ENCODE measurements at regions of chr3 and their contacts with region 1.

Region 1: GRCh38 chr3:102529452-102529851 is 94.6 kb downstream of the ZPLD1 start:
- DNase-seq: peak; percentile 77
- ATAC-seq: peak; percentile 55
- H3K4me3 ChIP-seq: no peak overlapping the region
- H3K27ac ChIP-seq: peak overlapping the region; percentile 95
- H3K4me1 ChIP-seq: peaks cover 37% of the 10 kb centered on the region
- H3K27me3 ChIP-seq: no peaks in the 10 kb centered on the region
- CTCF ChIP-seq: peak; percentile 87

Region 2: GRCh38 chr3:102400766-102401165 is 128.7 kb before region 1 on chr3:
- CTCF ChIA-PET with region 1: no interaction called
- POLR2A ChIA-PET with region 1: interaction called, 4 read pairs
- intact Hi-C with region 1: loop called (anchors 2 kb)
- DNase-seq: peak; percentile 94
- ATAC-seq: peak; percentile 94
- H3K4me3 ChIP-seq: peak overlapping the region; percentile 10; the same call in 1 of the 2 replicates
- H3K27ac ChIP-seq: peak overlapping the region; percentile 86
- H3K4me1 ChIP-seq: peaks cover 34% of the 10 kb centered on the region
- H3K27me3 ChIP-seq: no peaks in the 10 kb centered on the region
- CTCF ChIP-seq: no peak

Region 3: GRCh38 chr3:102466001-102466400 is 63.5 kb before region 1 on chr3:
- CTCF ChIA-PET with region 1: no interaction called
- POLR2A ChIA-PET with region 1: no interaction called
- intact Hi-C with region 1: loop called (anchors 2 kb)
- DNase-seq: peak; percentile 51
- ATAC-seq: peak; percentile 90
- H3K4me3 ChIP-seq: no peak overlapping the region
- H3K27ac ChIP-seq: no peak overlapping the region
- H3K4me1 ChIP-seq: peaks cover 6% of the 10 kb centered on the region
- H3K27me3 ChIP-seq: no peaks in the 10 kb centered on the region
- CTCF ChIP-seq: peak; percentile 66

Region 4: DNA sequence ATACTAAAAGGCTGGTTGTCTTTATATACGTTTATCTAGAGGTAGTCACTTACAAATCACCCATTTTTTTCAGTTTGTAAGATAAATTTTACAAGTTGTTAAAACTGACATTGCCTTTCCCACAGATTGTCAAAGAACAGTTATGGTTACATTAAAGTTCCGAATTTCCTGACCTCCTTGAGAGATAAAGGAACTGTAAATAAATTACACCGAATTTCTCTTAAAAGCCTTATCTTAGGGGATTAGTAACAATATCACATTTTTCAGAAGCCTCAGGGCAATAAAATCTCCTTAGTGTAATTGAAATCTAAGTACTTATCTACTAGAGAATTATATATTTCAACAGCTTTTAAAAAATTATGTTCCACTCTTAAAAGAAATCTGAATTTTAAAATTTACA is 45.1 kb before region 1 on chr3:
- CTCF ChIA-PET with region 1: no interaction called
- POLR2A ChIA-PET with region 1: no interaction called
- intact Hi-C with region 1: loop called (anchors 1 kb)
- DNase-seq: peak; percentile 33
- ATAC-seq: no peak
- H3K4me3 ChIP-seq: no peak overlapping the region
- H3K27ac ChIP-seq: peak overlapping the region; percentile 89
- H3K4me1 ChIP-seq: peaks cover 32% of the 10 kb centered on the region
- H3K27me3 ChIP-seq: no peaks in the 10 kb centered on the region
- CTCF ChIP-seq: no peak

Region 5: DNA sequence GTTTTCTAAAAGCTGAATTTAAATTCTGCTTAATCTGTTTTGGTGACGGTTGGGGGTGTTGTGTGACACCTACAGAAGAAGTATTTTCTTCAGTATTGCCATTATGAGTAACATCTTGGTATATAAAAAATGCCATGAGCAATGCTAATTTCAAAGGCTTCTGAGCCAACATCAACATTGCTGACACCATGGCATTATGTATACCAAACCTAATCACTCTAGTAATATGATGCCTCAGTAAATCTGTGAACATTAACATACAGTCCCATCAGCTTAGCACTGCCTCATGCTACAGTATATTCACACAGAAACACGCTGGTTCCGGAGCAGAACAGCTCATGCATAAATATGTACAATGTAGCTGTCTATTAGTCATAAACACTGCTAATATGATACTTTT is 18.8 kb before region 1 on chr3:
- CTCF ChIA-PET with region 1: no interaction called
- POLR2A ChIA-PET with region 1: no interaction called
- intact Hi-C with region 1: loop called (anchors 2 kb)
- DNase-seq: peak; percentile 81
- ATAC-seq: peak; percentile 98
- H3K4me3 ChIP-seq: peak overlapping the region; percentile 22; the same call in 1 of the 2 replicates
- H3K27ac ChIP-seq: peak overlapping the region; percentile 46
- H3K4me1 ChIP-seq: peaks cover 31% of the 10 kb centered on the region
- H3K27me3 ChIP-seq: no peaks in the 10 kb centered on the region
- CTCF ChIP-seq: no peak

Measured in PC-3 (cell line).